Ovary (tissue), 10 donors: ENCODE measurements at regions of chr12 and their contacts with region 1.

Region 1: DNA sequence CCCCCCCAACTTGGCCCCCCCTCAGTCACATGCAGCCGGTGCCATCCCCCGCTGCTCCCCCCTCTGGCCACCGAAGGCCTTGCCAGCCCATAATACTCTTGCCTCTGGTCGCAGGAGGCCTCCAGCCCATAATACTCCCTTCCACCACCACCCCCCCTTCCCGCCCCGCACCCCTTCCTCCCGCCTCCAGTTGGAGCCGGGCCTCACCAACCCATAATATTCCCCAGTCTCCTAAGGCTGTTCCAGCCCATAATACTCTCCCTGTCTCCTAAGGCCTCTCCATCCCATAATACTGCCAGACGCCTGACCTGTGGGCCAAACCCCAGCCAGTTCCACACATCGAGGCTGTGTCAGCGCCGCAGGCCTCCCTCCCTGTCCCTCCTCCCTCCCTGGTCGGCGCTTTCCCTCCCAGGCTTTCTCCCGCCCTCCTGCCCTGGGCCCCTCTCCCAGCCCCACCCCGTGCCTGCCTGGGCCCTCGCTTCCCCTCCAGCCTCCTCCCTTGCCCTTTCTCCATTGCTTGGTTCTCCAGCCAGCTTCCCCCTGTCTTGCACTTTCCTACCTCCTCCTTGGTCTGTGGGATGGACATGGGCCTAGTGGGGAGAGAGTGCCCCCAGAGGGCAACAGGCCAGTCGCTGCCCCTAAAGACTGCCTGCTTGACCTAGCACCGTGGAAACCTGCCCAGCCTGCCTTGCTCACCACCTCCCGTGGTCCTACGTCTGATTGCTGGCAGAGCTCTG is 6.8 kb upstream of the CHD4 start:
- DNase-seq: peak; percentile 94 to 97 (median 97)
- H3K4me3 ChIP-seq: no peak overlapping the region
- H3K27ac ChIP-seq: peak overlapping the region; percentile 87 to 93
- H3K4me1 ChIP-seq: peaks cover 4% of the 10 kb centered on the region
- H3K27me3 ChIP-seq: no peaks in the 10 kb centered on the region
- CTCF ChIP-seq: no peak
- EP300 ChIP-seq: no peak
- POLR2A ChIP-seq: no peak

Region 2: DNA sequence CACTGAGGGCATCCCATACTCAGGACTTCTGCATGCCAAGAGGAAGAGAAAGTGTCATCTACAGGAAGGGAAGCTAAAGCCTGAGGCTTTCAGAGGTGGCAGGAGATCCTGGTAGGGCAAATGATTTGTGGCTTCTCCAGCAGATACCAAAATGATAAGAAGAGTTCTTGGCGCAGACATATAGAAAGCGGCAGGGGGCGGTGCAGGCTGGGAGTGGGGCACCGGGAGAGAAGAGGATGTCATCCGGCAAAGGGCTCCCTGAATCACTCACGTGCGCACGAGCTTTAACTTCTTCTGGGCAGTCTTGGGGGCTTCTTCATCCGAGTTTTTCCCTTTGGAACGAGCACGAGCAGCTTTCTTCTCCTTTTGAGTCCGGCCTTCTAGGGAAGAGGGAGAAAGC is 38.4 kb after region 1 on chr12:
- intact Hi-C with region 1: no loop called
- DNase-seq: peak in 1 of 5 donors; percentile 16
- H3K4me3 ChIP-seq: no peak overlapping the region
- H3K27ac ChIP-seq: no peak overlapping the region
- H3K4me1 ChIP-seq: no peaks in the 10 kb centered on the region
- H3K27me3 ChIP-seq: no peaks in the 10 kb centered on the region
- CTCF ChIP-seq: no peak
- EP300 ChIP-seq: no peak
- POLR2A ChIP-seq: no peak

Region 3: GRCh38 chr12:6662906-6663742 is 49.2 kb after region 1 on chr12 and contains the start of gene ING4:
- intact Hi-C with region 1: loop called in 2 of 4 experiments (anchors 5 to 10 kb)
- DNase-seq: peak; percentile 96 to 98 (median 97)
- H3K4me3 ChIP-seq: peak within 1 kb of the TSS; percentile 62
- H3K27ac ChIP-seq: peak within 1 kb of the TSS in 1 of 2 donors; percentile 68
- H3K4me1 ChIP-seq: peaks cover 7% of the 10 kb centered on the region
- H3K27me3 ChIP-seq: no peaks in the 10 kb centered on the region
- CTCF ChIP-seq: peak in 1 of 3 donors; percentile 7
- EP300 ChIP-seq: no peak
- POLR2A ChIP-seq: peak; percentile 33
- total RNA-seq, gene ING4: 26.1 to 39.9 (median 35.0) TPM

Region 4: GRCh38 chr12:6688999-6689882 is 75.3 kb after region 1 on chr12 and contains the start of gene ZNF384:
- intact Hi-C with region 1: loop called in 1 of 4 experiments (anchors 10 kb)
- DNase-seq: peak; percentile 96 to 98 (median 97)
- H3K4me3 ChIP-seq: peak within 1 kb of the TSS; percentile 69
- H3K27ac ChIP-seq: peak within 1 kb of the TSS; percentile 80 to 93
- H3K4me1 ChIP-seq: peaks cover 10% of the 10 kb centered on the region
- H3K27me3 ChIP-seq: no peaks in the 10 kb centered on the region
- CTCF ChIP-seq: peak in 2 of 3 donors; percentile 58
- EP300 ChIP-seq: peak; percentile 83
- POLR2A ChIP-seq: peak; percentile 56
- total RNA-seq, gene ZNF384: 22.1 to 64.9 (median 58.2) TPM

Region 5: GRCh38 chr12:6825398-6826124 is 211.6 kb after region 1 on chr12:
- intact Hi-C with region 1: loop called in 1 of 4 experiments (anchors 5 kb)
- DNase-seq: peak; percentile 73 to 91 (median 90)
- H3K4me3 ChIP-seq: peak overlapping the region; percentile 22
- H3K27ac ChIP-seq: no peak overlapping the region
- H3K4me1 ChIP-seq: peaks cover 14% of the 10 kb centered on the region
- H3K27me3 ChIP-seq: no peaks in the 10 kb centered on the region
- CTCF ChIP-seq: peak; percentile 87 to 91 (median 89)
- EP300 ChIP-seq: no peak
- POLR2A ChIP-seq: no peak